ENCODE measurements at regions of chrX and their contacts with region 1.

Region 1: GRCh38 chrX:131841496-131842410 is 181.3 kb upstream of the STK26 start:
- DNase-seq: peak; percentile 84

Region 2: DNA sequence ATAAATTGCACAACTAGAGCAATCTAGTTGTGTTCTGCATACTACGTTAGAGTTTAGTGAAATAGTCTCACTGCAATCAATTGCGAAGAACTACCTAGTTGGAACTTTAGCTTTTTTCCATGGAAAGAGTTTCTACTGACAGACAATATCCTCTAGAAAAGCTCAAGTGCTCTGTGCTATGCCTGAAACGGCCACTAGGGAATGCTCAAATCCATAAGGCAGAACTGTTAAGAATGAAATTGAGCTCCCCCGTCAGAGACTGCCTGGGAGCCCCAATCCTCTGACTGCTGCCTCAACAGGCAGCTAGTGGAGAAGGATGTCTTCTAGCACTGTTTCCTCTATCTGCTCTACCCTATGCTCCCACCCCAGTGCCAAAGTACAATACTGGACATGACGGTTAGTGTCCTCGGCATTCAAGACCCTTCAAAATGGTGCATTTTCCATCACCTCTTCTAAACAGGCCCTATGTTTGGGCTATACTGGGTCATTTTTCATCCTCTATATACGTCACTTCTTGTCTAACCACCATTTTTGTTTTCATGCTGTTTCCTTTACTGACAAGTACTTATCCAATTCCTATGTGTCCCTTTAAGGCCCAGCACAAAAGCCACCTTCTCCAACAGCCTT is 250.8 kb after region 1 on chrX:
- CTCF ChIA-PET with region 1: interaction called, 10 read pairs
- POLR2A ChIA-PET with region 1: no interaction called
- DNase-seq: peak; percentile 73

Region 3: DNA sequence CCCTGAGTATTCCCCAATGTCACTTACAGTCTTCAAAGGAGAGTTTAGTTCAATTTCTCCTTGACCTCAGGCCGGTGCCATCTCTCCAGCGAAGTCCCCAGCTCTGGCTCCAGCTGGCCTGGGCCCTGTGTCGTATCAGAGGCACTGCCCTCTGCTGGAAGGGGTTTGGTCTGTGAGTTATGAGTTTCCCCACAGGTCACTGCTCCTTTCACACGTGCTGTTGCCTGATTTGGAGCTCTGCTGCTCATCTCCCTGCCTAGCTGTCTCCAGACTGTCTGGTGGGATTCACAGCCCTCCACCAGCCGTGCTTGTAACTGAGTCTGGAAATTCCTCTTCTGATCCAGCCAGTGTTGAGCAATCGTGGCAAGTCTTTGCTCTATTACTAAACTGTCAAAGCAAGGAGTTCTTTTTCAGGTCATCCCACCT is 377.6 kb after region 1 on chrX and contains the start of gene RAP2C:
- CTCF ChIA-PET with region 1: interaction called, 10 read pairs
- POLR2A ChIA-PET with region 1: no interaction called
- DNase-seq: peak; percentile 82

Region 4: DNA sequence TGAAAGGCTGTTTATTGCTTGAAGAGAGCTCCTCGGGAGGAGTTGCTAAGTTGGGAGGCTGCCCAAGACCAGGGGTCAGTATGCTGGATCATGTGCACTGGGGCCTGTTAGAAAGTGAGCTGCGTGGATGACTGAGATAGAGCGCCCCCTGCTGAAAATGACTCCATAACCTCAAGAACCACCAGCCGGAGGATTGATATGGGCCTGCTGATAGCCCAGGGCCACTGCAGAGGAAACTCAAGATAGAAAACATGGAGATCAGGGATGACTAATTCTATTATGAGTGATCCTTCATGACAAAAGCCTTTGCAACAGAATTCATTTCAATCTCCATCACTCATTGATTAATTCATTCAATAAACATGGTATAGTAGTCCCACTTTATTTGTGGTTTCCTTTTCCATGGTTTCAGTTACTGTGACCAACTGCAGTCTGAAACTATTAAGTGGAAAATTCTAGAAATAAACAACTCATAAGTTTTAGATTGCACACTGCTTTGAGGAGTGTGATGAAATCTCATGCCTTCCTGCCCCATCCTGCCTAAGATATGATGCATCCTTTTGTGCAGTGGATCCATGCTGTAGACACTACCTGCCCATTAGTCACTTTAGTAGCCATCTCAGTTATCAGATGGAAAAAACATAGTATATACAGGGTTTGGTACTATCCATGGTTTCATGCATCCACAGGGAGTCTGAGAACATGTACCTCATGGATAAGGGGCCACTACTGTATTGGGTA is 773.8 kb after region 1 on chrX:
- CTCF ChIA-PET with region 1: interaction called, 12 read pairs
- POLR2A ChIA-PET with region 1: no interaction called
- DNase-seq: peak; percentile 68

Measured in HEK293T (cell line).